GM23248 (cell line): ENCODE measurements at regions of chr2 and their contacts with region 1.

Region 1: GRCh38 chr2:226813148-226813701 is 13.6 kb upstream of the IRS1 start:
- DNase-seq: peak; percentile 41
- H3K4me3 ChIP-seq: no peak overlapping the region
- H3K27ac ChIP-seq: no peak overlapping the region
- H3K4me1 ChIP-seq: no peaks in the 10 kb centered on the region
- H3K27me3 ChIP-seq: no peaks in the 10 kb centered on the region

Region 2: GRCh38 chr2:226977775-226978190 is 164.6 kb after region 1 on chr2:
- in situ Hi-C with region 1: loop called (anchors 5 kb)
- DNase-seq: peak; percentile 64
- H3K4me3 ChIP-seq: no peak overlapping the region
- H3K27ac ChIP-seq: no peak overlapping the region
- H3K4me1 ChIP-seq: peaks cover 9% of the 10 kb centered on the region
- H3K27me3 ChIP-seq: no peaks in the 10 kb centered on the region